Mammary epithelial cell (primary cell): ENCODE measurements at regions of chr7 and their contacts with region 1.

Region 1: DNA sequence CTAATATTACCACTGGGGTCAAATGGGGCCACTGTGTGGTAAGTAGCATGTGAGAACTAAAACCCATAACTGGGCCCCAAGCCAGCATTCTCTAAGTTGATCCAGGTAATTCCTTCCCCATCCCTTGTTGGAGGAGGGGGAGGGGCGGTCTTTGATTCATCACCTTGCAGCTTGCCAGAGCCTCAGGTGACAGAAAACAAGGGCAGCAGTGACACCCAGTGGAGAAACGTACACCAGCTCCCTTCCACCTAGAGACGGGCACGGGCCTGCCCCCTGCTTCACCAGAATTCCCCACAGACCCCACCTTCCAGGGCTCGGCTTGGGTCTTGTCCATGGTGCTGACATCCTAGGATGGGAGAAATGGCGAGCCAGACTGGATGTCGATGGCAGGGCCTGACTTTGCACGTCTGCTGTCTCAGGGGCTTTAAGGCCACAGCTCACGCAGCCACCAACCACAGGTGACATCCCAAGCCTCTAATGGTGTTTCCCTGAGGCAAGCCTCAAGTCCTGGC is 102.0 kb downstream of the STRA8 start:
- DNase-seq: peak; percentile 98
- H3K4me3 ChIP-seq: no peak overlapping the region
- H3K27ac ChIP-seq: no peak overlapping the region
- H3K4me1 ChIP-seq: peaks cover 22% of the 10 kb centered on the region
- H3K27me3 ChIP-seq: no peaks in the 10 kb centered on the region
- CTCF ChIP-seq: peak; percentile 85 to 90

Region 2: DNA sequence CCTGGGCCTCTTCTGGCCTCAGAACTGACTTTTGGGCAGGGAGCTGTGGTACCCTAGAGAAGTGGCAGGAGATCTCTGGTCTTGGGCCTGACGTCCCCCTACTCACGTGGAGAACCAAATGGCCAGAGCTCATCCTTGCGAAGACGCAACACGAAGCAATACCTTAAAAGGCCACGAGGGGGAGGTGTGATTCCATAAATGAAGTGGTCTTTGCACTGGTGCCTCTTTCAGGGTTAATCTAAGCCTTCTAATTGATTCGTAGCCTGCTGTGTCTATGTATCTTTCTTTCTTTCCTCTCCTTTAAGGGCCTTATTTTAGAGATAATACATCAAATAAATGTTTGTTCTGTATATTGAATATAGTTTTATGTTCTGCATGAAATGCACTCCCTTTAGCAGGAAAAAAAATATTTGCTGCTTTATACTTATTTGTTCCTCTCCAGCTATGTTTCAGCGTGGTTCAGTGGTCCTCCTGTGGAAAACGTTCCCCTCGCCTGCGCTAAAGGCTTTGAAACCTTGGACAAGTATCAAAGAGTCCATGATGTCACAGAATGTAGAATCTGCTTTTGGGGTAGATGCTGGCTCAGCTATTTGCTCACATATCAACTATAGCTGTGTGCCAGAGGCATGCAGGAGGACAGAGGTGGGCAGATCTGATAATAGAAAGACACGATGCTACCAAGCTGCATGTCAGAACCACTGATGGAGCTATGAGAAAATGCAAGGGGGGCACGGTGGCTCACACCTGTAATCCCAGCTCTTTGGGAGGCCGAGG is 61.0 kb before region 1 on chr7:
- CTCF ChIA-PET with region 1: interaction called, 12 read pairs
- dilution Hi-C with region 1: no loop called
- in situ Hi-C with region 1: no loop called
- intact Hi-C with region 1: no loop called
- DNase-seq: peak; percentile 57
- H3K4me3 ChIP-seq: no peak overlapping the region
- H3K27ac ChIP-seq: no peak overlapping the region
- H3K4me1 ChIP-seq: no peaks in the 10 kb centered on the region
- H3K27me3 ChIP-seq: no peaks in the 10 kb centered on the region
- CTCF ChIP-seq: peak; percentile 80 to 82

Region 3: GRCh38 chr7:135286876-135287275 is 48.8 kb before region 1 on chr7:
- CTCF ChIA-PET with region 1: interaction called, 8 read pairs
- dilution Hi-C with region 1: no loop called
- in situ Hi-C with region 1: loop called (anchors 5 kb)
- intact Hi-C with region 1: no loop called
- DNase-seq: no peak
- H3K4me3 ChIP-seq: no peak overlapping the region
- H3K27ac ChIP-seq: no peak overlapping the region
- H3K4me1 ChIP-seq: peaks cover 25% of the 10 kb centered on the region
- H3K27me3 ChIP-seq: no peaks in the 10 kb centered on the region
- CTCF ChIP-seq: no peak

Region 4: DNA sequence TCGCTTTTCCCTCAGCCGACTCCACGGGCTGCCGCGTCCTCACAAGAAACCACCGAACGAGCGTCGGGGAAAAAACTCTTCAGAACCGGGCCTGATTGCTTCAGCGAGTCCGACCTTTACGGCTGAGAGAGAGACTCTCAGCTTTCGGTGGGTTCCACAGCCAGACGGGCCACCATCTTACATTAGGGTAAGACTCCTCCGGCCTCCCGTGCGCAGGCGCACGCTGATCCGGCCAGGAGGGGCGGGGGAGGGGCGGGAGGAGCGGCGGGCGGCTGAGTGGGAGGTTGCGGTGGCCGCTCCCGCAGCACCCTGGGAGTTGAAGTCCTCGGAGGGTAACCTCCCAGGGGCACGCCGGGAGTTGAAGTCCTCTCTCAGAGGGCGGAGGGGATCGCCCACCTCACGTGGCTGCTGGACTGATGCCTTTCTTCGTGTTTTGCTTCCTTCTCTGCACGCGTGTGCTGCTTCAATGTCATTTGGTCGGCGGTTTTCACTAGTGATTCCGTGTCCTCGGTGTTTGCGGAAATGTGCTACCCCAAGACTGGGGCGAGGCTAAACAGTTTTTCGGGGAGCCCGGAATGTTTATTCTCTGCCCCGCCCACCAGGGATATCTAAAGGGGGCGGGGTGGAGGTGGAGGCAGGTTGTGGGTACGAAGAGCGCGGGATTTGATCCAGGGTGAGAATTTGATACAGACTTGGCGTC is 174.4 kb after region 1 on chr7 and contains the start of gene CNOT4:
- CTCF ChIA-PET with region 1: no interaction called
- dilution Hi-C with region 1: no loop called
- in situ Hi-C with region 1: no loop called
- intact Hi-C with region 1: loop called (anchors 2 kb)
- DNase-seq: peak; percentile 96
- H3K4me3 ChIP-seq: peak within 1 kb of the TSS; percentile 73 to 91 (median 86)
- H3K27ac ChIP-seq: peak within 1 kb of the TSS; percentile 95
- H3K4me1 ChIP-seq: peaks cover 7% of the 10 kb centered on the region
- H3K27me3 ChIP-seq: no peaks in the 10 kb centered on the region
- CTCF ChIP-seq: no peak
- total RNA-seq, gene CNOT4: 12.7 to 23.1 TPM

Region 5: DNA sequence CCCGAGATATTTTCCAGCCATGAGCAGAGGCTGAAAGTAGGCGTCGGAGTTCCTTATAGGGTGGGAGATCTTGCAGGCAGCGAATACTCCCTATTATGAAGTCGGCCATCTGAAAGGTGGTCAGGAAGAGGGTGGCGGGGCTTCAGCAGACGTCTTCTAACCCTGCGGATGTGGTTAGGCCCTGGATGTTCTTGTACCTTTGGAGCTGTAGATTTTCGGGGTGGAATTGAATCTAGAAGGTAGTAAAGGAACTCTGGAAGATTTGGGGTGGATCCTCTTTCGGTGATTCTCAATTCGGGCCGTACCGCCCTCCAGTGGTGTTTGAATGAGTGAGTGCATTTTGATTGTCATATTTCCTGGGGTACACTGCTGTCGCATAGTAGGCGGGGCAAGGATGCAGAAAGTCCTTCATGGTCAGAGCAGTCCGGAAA is 222.7 kb after region 1 on chr7:
- CTCF ChIA-PET with region 1: no interaction called
- dilution Hi-C with region 1: no loop called
- in situ Hi-C with region 1: no loop called
- intact Hi-C with region 1: loop called (anchors 1 kb)
- DNase-seq: peak; percentile 64
- H3K4me3 ChIP-seq: peak overlapping the region; percentile 76 to 83 (median 79)
- H3K27ac ChIP-seq: peak overlapping the region; percentile 94
- H3K4me1 ChIP-seq: peaks cover 11% of the 10 kb centered on the region
- H3K27me3 ChIP-seq: no peaks in the 10 kb centered on the region
- CTCF ChIP-seq: peak; percentile 39 to 64

Region 6: GRCh38 chr7:135645296-135645904 is 309.7 kb after region 1 on chr7:
- CTCF ChIA-PET with region 1: no interaction called
- dilution Hi-C with region 1: no loop called
- in situ Hi-C with region 1: no loop called
- intact Hi-C with region 1: loop called (anchors 2 kb)
- DNase-seq: peak; percentile 26
- H3K4me3 ChIP-seq: no peak overlapping the region
- H3K27ac ChIP-seq: no peak overlapping the region
- H3K4me1 ChIP-seq: no peaks in the 10 kb centered on the region
- H3K27me3 ChIP-seq: no peaks in the 10 kb centered on the region
- CTCF ChIP-seq: peak; percentile 70 to 73

Region 7: GRCh38 chr7:135795846-135796570 is 460.3 kb after region 1 on chr7:
- CTCF ChIA-PET with region 1: no interaction called
- dilution Hi-C with region 1: no loop called
- in situ Hi-C with region 1: no loop called
- intact Hi-C with region 1: loop called (anchors 5 kb)
- DNase-seq: peak; percentile 39
- H3K4me3 ChIP-seq: no peak overlapping the region
- H3K27ac ChIP-seq: no peak overlapping the region
- H3K4me1 ChIP-seq: no peaks in the 10 kb centered on the region
- H3K27me3 ChIP-seq: no peaks in the 10 kb centered on the region
- CTCF ChIP-seq: no peak